CD4-positive, alpha-beta memory T cell (primary cell): ENCODE measurements at regions of chr12 and their contacts with region 1.

Region 1: GRCh38 chr12:57904848-57905811 is 36.2 kb upstream of the ATP23 start:
- DNase-seq: peak; percentile 76 to 84 (median 80)
- H3K4me3 ChIP-seq: no peak overlapping the region
- H3K4me3 Mint-ChIP-seq: peak overlapping the region in 6 of 8 donors; percentile 37 to 74 (median 64)
- H3K27ac ChIP-seq: no peak overlapping the region
- H3K27ac Mint-ChIP-seq: peak overlapping the region; percentile 2 to 86 (median 50)
- H3K4me1 ChIP-seq: peaks cover 3% of the 10 kb centered on the region
- H3K4me1 Mint-ChIP-seq: peaks cover 5 to 9% (median 7%) of the 10 kb centered on the region in 4 donors
- H3K27me3 ChIP-seq: no peaks in the 10 kb centered on the region
- H3K27me3 Mint-ChIP-seq: peaks cover 0 to 3% of the 10 kb centered on the region in 2 donors

Region 2: DNA sequence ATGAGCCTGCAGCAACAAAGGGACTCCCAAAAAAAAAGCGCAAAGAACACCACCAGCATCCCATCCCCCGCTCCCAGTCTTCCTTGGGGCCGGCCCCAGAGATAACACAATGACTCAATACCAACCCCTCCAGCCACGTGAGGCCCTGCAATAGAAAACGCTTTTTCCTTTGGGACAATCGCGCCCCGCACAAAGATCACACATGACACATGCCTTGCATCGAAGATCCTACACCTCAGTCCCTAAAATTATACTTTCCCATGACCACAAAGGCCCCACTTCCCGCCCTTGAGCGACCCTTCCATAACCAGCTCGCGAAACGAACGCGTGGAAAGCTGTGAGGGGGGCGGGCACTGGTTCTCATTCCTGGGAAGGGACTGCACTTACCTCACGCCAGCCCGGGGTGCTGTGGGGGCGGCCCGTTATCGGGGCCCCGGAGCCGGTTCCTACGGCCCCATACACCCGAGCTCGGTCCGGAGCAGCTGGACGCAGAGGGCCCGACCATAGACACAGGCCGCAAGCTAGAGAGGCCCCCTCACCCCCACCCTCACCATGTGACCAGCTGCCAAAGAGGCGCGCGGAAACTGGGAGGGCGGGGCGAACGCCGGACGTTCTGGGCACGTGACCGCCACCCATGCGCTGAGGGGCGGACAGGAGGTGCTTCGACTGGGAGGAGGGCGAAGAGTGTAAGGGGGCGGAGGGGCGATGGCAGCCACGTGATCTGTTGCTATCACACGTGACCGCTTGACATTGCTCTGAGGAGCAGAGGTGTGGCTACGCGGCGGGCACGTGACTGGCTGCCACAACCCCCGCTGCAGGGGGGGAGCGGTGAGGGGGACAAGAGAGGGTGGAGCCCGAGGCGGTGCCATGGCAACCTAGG is 153.1 kb before region 1 on chr12 and contains the start of gene CDK4:
- CTCF ChIA-PET with region 1: interaction called, 18 read pairs
- POLR2A ChIA-PET with region 1: interaction called, 8 read pairs
- intact Hi-C with region 1: loop called (anchors 1 kb)
- DNase-seq: peak; percentile 97 to 100 (median 99)
- H3K4me3 ChIP-seq: peak within 1 kb of the TSS; percentile 30 to 80
- H3K4me3 Mint-ChIP-seq: peak within 1 kb of the TSS; percentile 82 to 98 (median 90)
- H3K27ac ChIP-seq: peak within 1 kb of the TSS; percentile 82
- H3K27ac Mint-ChIP-seq: peak within 1 kb of the TSS; percentile 87 to 100 (median 99)
- H3K4me1 ChIP-seq: peaks cover 50% of the 10 kb centered on the region
- H3K4me1 Mint-ChIP-seq: peaks cover 46 to 58% (median 51%) of the 10 kb centered on the region in 4 donors
- H3K27me3 ChIP-seq: no peaks in the 10 kb centered on the region
- H3K27me3 Mint-ChIP-seq: no peaks in the 10 kb centered on the region
- total RNA-seq, gene CDK4: 44.4 to 48.3 TPM

Region 3: GRCh38 chr12:57782608-57783465 is 122.3 kb before region 1 on chr12 and contains the start of gene TSFM:
- CTCF ChIA-PET with region 1: interaction called, 42 read pairs
- POLR2A ChIA-PET with region 1: interaction called, 3 read pairs
- intact Hi-C with region 1: loop called (anchors 1 kb)
- DNase-seq: peak; percentile 93 to 96 (median 94)
- H3K4me3 ChIP-seq: peak within 1 kb of the TSS; percentile 92 to 97
- H3K4me3 Mint-ChIP-seq: peak within 1 kb of the TSS; percentile 95 to 100 (median 98)
- H3K27ac ChIP-seq: peak within 1 kb of the TSS; percentile 73
- H3K27ac Mint-ChIP-seq: peak within 1 kb of the TSS; percentile 95 to 100 (median 99)
- H3K4me1 ChIP-seq: peaks cover 59% of the 10 kb centered on the region
- H3K4me1 Mint-ChIP-seq: peaks cover 46 to 57% (median 50%) of the 10 kb centered on the region in 4 donors
- H3K27me3 ChIP-seq: no peaks in the 10 kb centered on the region
- H3K27me3 Mint-ChIP-seq: no peaks in the 10 kb centered on the region
- total RNA-seq, gene TSFM: 18.9 to 22.2 TPM

Region 4: DNA sequence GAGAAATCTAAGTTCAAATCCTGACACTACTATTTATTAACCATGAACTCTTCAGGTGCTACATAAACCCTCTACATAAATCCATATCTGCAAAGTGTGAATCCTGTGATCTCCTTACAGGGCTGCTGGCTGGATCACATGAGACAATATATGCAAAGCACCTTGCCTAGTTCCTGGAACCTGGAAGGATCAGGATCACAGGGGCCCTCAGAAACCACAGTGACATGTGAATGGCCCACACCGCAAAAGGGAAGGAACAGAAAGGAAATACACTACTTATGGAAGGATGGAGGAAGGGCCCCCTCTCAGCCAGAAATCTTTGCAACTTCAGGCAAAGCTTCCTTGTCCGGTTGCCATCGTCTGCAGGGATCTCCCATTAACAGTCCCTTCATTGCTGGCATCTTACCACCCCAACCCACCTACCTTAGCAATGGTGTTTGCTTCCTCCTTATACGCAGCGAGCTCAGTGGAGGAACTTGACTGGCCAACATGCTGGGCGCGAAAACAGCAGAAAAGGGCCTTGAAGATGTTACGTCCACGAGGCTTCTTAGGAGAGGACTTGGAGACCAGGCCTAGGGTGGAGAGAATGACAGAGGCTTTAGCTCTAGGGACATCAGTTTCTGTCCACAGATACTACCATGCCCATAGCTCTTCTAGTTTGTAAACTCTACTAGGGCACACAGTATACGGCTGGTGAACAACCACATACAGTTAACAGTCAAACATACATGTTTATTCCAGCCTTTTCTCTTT is 75.9 kb before region 1 on chr12:
- CTCF ChIA-PET with region 1: interaction called, 76 read pairs
- POLR2A ChIA-PET with region 1: interaction called, 4 read pairs
- intact Hi-C with region 1: loop called (anchors 1 kb)
- DNase-seq: no peak
- H3K4me3 ChIP-seq: no peak overlapping the region
- H3K4me3 Mint-ChIP-seq: peak overlapping the region in 1 of 8 donors; percentile 57
- H3K27ac ChIP-seq: no peak overlapping the region
- H3K27ac Mint-ChIP-seq: peak overlapping the region in 6 of 7 donors; percentile 17 to 82 (median 71)
- H3K4me1 ChIP-seq: peaks cover 54% of the 10 kb centered on the region
- H3K4me1 Mint-ChIP-seq: peaks cover 32 to 60% (median 44%) of the 10 kb centered on the region in 4 donors
- H3K27me3 ChIP-seq: no peaks in the 10 kb centered on the region
- H3K27me3 Mint-ChIP-seq: no peaks in the 10 kb centered on the region

Region 5: GRCh38 chr12:57888409-57889157 is 16.5 kb before region 1 on chr12:
- CTCF ChIA-PET with region 1: interaction called, 46 read pairs
- POLR2A ChIA-PET with region 1: interaction called, 20 read pairs
- intact Hi-C with region 1: no loop called
- DNase-seq: peak in 4 of 5 donors; percentile 30 to 55 (median 32)
- H3K4me3 ChIP-seq: no peak overlapping the region
- H3K4me3 Mint-ChIP-seq: peak overlapping the region in 7 of 8 donors; percentile 35 to 72 (median 58)
- H3K27ac ChIP-seq: no peak overlapping the region
- H3K27ac Mint-ChIP-seq: peak overlapping the region in 5 of 7 donors; percentile 16 to 89 (median 36)
- H3K4me1 ChIP-seq: peaks cover 23% of the 10 kb centered on the region
- H3K4me1 Mint-ChIP-seq: peaks cover 11 to 44% (median 20%) of the 10 kb centered on the region in 4 donors
- H3K27me3 ChIP-seq: no peaks in the 10 kb centered on the region
- H3K27me3 Mint-ChIP-seq: peaks cover 0 to 2% of the 10 kb centered on the region in 2 donors

Region 6: DNA sequence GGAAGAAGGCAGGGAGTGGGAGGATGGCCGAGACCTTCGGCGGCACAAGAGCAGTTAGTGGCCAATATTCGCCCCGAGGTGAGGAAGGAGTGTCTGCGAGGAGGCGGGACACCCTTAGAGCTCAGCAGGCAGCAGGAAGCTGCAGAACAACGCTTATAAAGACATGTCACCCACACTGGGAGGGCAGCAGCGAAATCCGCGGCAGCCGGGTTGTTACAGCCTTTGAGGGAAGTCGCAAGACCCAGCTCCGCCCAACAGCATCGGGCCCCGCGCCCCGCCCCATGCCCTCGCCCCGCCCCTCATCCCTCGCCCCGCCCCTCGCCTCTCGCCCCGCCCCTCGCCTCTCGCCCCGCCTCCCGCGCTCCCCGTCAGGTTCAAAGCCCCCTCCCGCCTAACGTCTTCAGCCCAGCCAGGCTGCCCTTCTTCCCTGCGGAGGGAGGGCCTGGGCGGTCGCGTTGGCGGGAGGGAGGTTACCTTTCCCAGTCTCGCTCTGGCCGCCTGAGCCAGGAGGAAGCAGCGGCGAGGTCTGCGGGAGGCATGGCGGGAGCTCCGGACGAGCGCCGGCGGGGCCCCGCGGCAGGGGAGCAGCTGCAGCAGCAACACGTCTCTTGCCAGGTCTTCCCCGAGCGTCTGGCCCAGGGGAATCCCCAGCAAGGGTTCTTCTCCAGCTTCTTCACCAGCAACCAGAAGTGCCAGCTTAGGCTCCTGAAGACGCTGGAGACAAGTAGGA is 36.2 kb after region 1 on chr12 and contains the start of gene ATP23:
- CTCF ChIA-PET with region 1: no interaction called
- POLR2A ChIA-PET with region 1: no interaction called
- intact Hi-C with region 1: loop called (anchors 1 kb)
- DNase-seq: peak; percentile 90 to 95 (median 94)
- H3K4me3 ChIP-seq: peak within 1 kb of the TSS; percentile 67 to 82
- H3K4me3 Mint-ChIP-seq: peak within 1 kb of the TSS; percentile 96 to 99 (median 99)
- H3K27ac ChIP-seq: peak within 1 kb of the TSS; percentile 90
- H3K27ac Mint-ChIP-seq: peak within 1 kb of the TSS; percentile 85 to 100 (median 99)
- H3K4me1 ChIP-seq: peaks cover 23% of the 10 kb centered on the region
- H3K4me1 Mint-ChIP-seq: peaks cover 24 to 49% (median 32%) of the 10 kb centered on the region in 4 donors
- H3K27me3 ChIP-seq: no peaks in the 10 kb centered on the region
- H3K27me3 Mint-ChIP-seq: no peaks in the 10 kb centered on the region
- total RNA-seq, gene ATP23: 6.1 to 6.7 TPM

Region 7: GRCh38 chr12:57952766-57953165 is 47.6 kb after region 1 on chr12:
- CTCF ChIA-PET with region 1: no interaction called
- POLR2A ChIA-PET with region 1: no interaction called
- intact Hi-C with region 1: no loop called
- DNase-seq: no peak
- H3K4me3 ChIP-seq: no peak overlapping the region
- H3K4me3 Mint-ChIP-seq: no peak overlapping the region
- H3K27ac ChIP-seq: no peak overlapping the region
- H3K27ac Mint-ChIP-seq: no peak overlapping the region
- H3K4me1 ChIP-seq: no peaks in the 10 kb centered on the region
- H3K4me1 Mint-ChIP-seq: no peaks in the 10 kb centered on the region
- H3K27me3 ChIP-seq: no peaks in the 10 kb centered on the region
- H3K27me3 Mint-ChIP-seq: no peaks in the 10 kb centered on the region